PC-9 (cell line): ENCODE measurements at regions of chr20 and their contacts with region 1.

Region 1: GRCh38 chr20:48614575-48615279 is 213.1 kb downstream of the PREX1 start:
- DNase-seq: peak; percentile 56 to 64
- H3K4me3 ChIP-seq: no peak overlapping the region
- H3K27ac ChIP-seq: no peak overlapping the region
- H3K4me1 ChIP-seq: peaks cover 27% of the 10 kb centered on the region
- H3K27me3 ChIP-seq: no peaks in the 10 kb centered on the region
- CTCF ChIP-seq: no peak

Region 2: DNA sequence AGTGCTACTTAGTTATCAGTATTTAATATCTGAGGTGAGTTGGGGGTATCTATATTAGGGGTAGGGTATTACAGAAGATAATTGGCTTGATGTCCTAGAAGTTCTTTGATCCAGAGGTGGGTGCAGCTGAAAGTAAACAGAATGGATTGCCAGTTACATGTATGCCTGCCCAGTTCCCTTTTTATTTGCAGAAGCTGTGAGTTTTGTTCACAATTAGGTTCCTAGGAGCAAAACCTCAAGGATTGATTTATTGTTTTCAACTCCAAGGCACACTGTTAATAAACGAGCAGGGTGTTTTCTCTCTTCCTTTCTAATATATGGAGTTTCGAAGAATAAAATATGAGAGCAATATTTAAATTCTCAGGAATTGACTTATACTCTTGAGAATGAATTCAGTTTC is 958.4 kb before region 1 on chr20:
- CTCF ChIA-PET with region 1: no interaction called
- POLR2A ChIA-PET with region 1: no interaction called
- intact Hi-C with region 1: no loop called
- DNase-seq: no peak
- H3K4me3 ChIP-seq: no peak overlapping the region
- H3K27ac ChIP-seq: no peak overlapping the region
- H3K4me1 ChIP-seq: no peaks in the 10 kb centered on the region
- H3K27me3 ChIP-seq: no peaks in the 10 kb centered on the region
- CTCF ChIP-seq: no peak

Region 3: GRCh38 chr20:48421163-48421946 is 193.4 kb before region 1 on chr20:
- CTCF ChIA-PET with region 1: interaction called, 11 read pairs
- POLR2A ChIA-PET with region 1: no interaction called
- intact Hi-C with region 1: no loop called
- DNase-seq: peak in 1 of 2 experiments; percentile 38
- H3K4me3 ChIP-seq: no peak overlapping the region
- H3K27ac ChIP-seq: no peak overlapping the region
- H3K4me1 ChIP-seq: no peaks in the 10 kb centered on the region
- H3K27me3 ChIP-seq: no peaks in the 10 kb centered on the region
- CTCF ChIP-seq: peak; percentile 55

Region 4: GRCh38 chr20:48970551-48971365 is 356.0 kb after region 1 on chr20:
- CTCF ChIA-PET with region 1: no interaction called
- POLR2A ChIA-PET with region 1: interaction called, 11 read pairs
- intact Hi-C with region 1: no loop called
- DNase-seq: no peak
- H3K4me3 ChIP-seq: no peak overlapping the region
- H3K27ac ChIP-seq: no peak overlapping the region
- H3K4me1 ChIP-seq: no peaks in the 10 kb centered on the region
- H3K27me3 ChIP-seq: no peaks in the 10 kb centered on the region
- CTCF ChIP-seq: no peak